Left colon (tissue), 2 donors: ENCODE measurements at regions of chr9 and their contacts with region 1.

Region 1: GRCh38 chr9:92438900-92439526 is 14.7 kb upstream of the OMD start:
- DNase-seq: no peak
- ATAC-seq: no peak

Region 2: GRCh38 chr9:92349771-92350739 is 89.0 kb before region 1 on chr9:
- intact Hi-C with region 1: loop called in 1 of 2 experiments (anchors 5 kb)
- DNase-seq: no peak
- ATAC-seq: peak; percentile 87

Region 3: DNA sequence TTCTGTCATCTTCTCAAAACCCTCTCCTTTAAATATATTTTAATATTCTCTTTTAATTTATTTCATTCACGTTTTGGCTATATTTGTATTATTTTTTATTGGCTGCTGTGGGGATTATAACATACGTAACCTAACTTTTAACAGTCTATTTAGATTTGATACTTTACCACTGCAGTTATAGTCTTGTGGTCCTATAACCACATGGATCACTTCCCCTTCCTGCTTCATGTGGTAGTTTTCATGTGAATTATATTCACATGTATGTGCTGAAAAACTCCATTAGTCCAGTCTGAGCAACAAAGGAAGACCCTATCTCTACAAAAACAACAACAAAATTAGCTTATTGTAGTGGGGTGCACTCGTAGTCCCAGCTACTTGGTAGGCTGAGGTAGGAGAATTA is 78.9 kb before region 1 on chr9:
- intact Hi-C with region 1: no loop called
- DNase-seq: no peak
- ATAC-seq: no peak